Activated CD4-positive, alpha-beta memory T cell treated with anti-CD3 and anti-CD28 coated beads, Interleukin-2, amount 10 ng/mL, durations not matched to agents 7 days and 5 days (primary cell): ENCODE measurements at regions of chr4 and their contacts with region 1.

Region 1: GRCh38 chr4:98995183-98996055 is at the start of gene METAP1:
- DNase-seq: peak; percentile 97
- H3K4me3 Mint-ChIP-seq: peak within 1 kb of the TSS; percentile 79
- H3K27ac Mint-ChIP-seq: peak within 1 kb of the TSS; percentile 98
- H3K4me1 Mint-ChIP-seq: peaks cover 29% of the 10 kb centered on the region
- H3K27me3 Mint-ChIP-seq: no peaks in the 10 kb centered on the region
- total RNA-seq, gene METAP1: 41.5 to 44.9 TPM

Region 2: GRCh38 chr4:98150092-98150761 is 845.2 kb before region 1 on chr4:
- CTCF ChIA-PET with region 1: interaction called, 12 read pairs
- POLR2A ChIA-PET with region 1: interaction called, 6 read pairs
- DNase-seq: no peak
- H3K4me3 Mint-ChIP-seq: no peak overlapping the region
- H3K27ac Mint-ChIP-seq: no peak overlapping the region
- H3K4me1 Mint-ChIP-seq: peaks cover 12% of the 10 kb centered on the region
- H3K27me3 Mint-ChIP-seq: no peaks in the 10 kb centered on the region

Region 3: DNA sequence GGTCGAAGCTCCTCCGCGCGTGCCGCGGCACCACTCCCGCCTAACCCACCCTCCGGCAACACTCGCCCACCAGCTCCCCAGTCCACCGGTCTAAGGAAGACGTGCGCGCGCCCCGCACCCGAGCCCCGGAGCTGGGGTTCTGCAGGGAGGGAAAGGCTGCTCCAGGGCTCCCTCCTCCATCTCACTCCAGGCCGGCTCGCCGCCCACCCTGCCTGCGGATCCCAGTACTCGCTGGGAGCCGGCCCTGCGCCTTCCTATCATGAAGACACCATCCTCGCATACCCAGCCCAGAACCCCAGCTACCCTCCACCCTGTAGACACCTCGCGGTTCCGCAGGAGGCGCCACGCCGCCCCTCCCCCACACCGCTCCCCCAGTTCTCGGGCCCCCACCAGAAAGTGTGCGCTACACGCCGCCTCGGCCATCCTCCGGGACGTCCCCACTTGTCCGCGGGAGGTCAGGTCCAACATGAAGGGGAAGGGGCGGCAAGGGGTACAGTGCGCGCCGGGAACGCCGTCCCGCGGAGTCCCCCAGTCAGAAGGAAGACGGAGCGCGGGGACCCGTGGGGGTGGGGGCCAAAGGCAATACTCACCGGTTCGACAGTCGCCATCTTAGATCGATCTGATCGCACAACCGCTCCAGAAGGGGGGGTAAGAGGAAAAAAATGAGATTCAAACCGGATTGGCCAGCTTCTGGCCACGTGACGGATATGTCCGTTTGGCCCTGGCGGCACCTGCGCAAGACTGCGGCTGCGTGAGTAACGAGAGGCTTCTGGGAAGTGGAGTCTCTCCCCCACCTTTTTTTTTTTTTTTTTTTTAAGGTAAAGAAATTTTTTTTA is 66.7 kb before region 1 on chr4 and contains the start of gene EIF4E:
- CTCF ChIA-PET with region 1: interaction called, 40 read pairs
- POLR2A ChIA-PET with region 1: interaction called, 91 read pairs
- DNase-seq: peak; percentile 98
- H3K4me3 Mint-ChIP-seq: peak within 1 kb of the TSS; percentile 96
- H3K27ac Mint-ChIP-seq: peak within 1 kb of the TSS; percentile 97
- H3K4me1 Mint-ChIP-seq: peaks cover 46% of the 10 kb centered on the region
- H3K27me3 Mint-ChIP-seq: no peaks in the 10 kb centered on the region
- total RNA-seq, gene EIF4E: 80.1 to 88.5 TPM

Region 4: GRCh38 chr4:98958065-98958464 is 37.4 kb before region 1 on chr4:
- CTCF ChIA-PET with region 1: no interaction called
- POLR2A ChIA-PET with region 1: no interaction called
- DNase-seq: no peak
- H3K4me3 Mint-ChIP-seq: no peak overlapping the region
- H3K27ac Mint-ChIP-seq: no peak overlapping the region
- H3K4me1 Mint-ChIP-seq: no peaks in the 10 kb centered on the region
- H3K27me3 Mint-ChIP-seq: peaks cover 4% of the 10 kb centered on the region

Region 5: DNA sequence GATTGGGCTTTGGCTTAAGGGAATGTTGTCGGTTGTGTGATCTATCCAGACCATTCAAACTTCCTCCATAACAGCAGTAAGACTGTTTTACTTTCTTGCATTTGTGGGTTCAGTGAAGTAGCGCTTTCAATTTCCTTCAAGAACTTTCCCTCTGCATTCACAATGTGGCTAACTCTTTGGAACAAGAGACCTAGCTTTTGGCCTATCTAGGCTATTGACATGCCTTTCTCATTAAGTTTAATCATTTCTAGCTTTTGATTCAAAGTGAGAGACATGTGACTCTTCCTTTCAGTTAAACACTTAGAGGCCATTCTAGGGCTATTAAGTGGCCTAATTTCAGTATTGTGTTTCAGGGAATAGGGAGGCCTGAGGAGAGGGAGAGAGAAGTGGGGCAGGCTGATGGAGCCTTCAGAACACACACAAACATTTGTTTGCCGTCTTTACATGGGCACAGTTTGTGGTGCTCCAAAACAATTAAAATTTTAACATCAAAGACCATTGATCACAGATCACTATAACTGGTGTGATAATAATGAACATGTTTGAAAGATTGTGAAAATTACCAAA is 59.1 kb after region 1 on chr4:
- CTCF ChIA-PET with region 1: interaction called, 181 read pairs
- POLR2A ChIA-PET with region 1: interaction called, 31 read pairs
- DNase-seq: no peak
- H3K4me3 Mint-ChIP-seq: no peak overlapping the region
- H3K27ac Mint-ChIP-seq: peak overlapping the region; percentile 62
- H3K4me1 Mint-ChIP-seq: peaks cover 43% of the 10 kb centered on the region
- H3K27me3 Mint-ChIP-seq: no peaks in the 10 kb centered on the region

Region 6: GRCh38 chr4:99088481-99089365 is 93.3 kb after region 1 on chr4 and contains the start of gene ADH5:
- CTCF ChIA-PET with region 1: interaction called, 17 read pairs
- POLR2A ChIA-PET with region 1: interaction called, 61 read pairs
- DNase-seq: peak; percentile 92
- H3K4me3 Mint-ChIP-seq: peak within 1 kb of the TSS; percentile 93
- H3K27ac Mint-ChIP-seq: peak within 1 kb of the TSS; percentile 97
- H3K4me1 Mint-ChIP-seq: peaks cover 45% of the 10 kb centered on the region
- H3K27me3 Mint-ChIP-seq: no peaks in the 10 kb centered on the region
- total RNA-seq, gene ADH5: 107 to 114 TPM